ENCODE measurements at regions of chr1 and their contacts with region 1.

Region 1: GRCh38 chr1:186375088-186375953 is at the starts of genes ODR4 and TPR:
- DNase-seq: peak; percentile 97
- H3K4me3 Mint-ChIP-seq: peak within 1 kb of the TSS; percentile 99
- H3K27ac Mint-ChIP-seq: peak within 1 kb of the TSS; percentile 90
- H3K4me1 Mint-ChIP-seq: peaks cover 50% of the 10 kb centered on the region
- H3K27me3 Mint-ChIP-seq: no peaks in the 10 kb centered on the region
- total RNA-seq, gene ODR4: 12.4 to 13.3 TPM
- total RNA-seq, gene TPR: 165 to 167 TPM

Region 2: GRCh38 chr1:186244825-186245224 is 130.5 kb before region 1 on chr1:
- CTCF ChIA-PET with region 1: no interaction called
- POLR2A ChIA-PET with region 1: no interaction called
- DNase-seq: no peak
- H3K4me3 Mint-ChIP-seq: no peak overlapping the region
- H3K27ac Mint-ChIP-seq: no peak overlapping the region
- H3K4me1 Mint-ChIP-seq: no peaks in the 10 kb centered on the region
- H3K27me3 Mint-ChIP-seq: peaks cover 5% of the 10 kb centered on the region

Region 3: GRCh38 chr1:186325239-186325638 is 50.1 kb before region 1 on chr1:
- CTCF ChIA-PET with region 1: interaction called, 17 read pairs
- POLR2A ChIA-PET with region 1: no interaction called
- DNase-seq: peak; percentile 32
- H3K4me3 Mint-ChIP-seq: no peak overlapping the region
- H3K27ac Mint-ChIP-seq: peak overlapping the region; percentile 68
- H3K4me1 Mint-ChIP-seq: peaks cover 38% of the 10 kb centered on the region
- H3K27me3 Mint-ChIP-seq: no peaks in the 10 kb centered on the region

Region 4: GRCh38 chr1:186330758-186331157 is 44.6 kb before region 1 on chr1:
- CTCF ChIA-PET with region 1: interaction called, 17 read pairs
- POLR2A ChIA-PET with region 1: no interaction called
- DNase-seq: no peak
- H3K4me3 Mint-ChIP-seq: no peak overlapping the region
- H3K27ac Mint-ChIP-seq: peak overlapping the region; percentile 42
- H3K4me1 Mint-ChIP-seq: peaks cover 8% of the 10 kb centered on the region
- H3K27me3 Mint-ChIP-seq: no peaks in the 10 kb centered on the region

Region 5: GRCh38 chr1:186363891-186364290 is 11.4 kb before region 1 on chr1:
- CTCF ChIA-PET with region 1: interaction called, 29 read pairs
- POLR2A ChIA-PET with region 1: no interaction called
- DNase-seq: no peak
- H3K4me3 Mint-ChIP-seq: no peak overlapping the region
- H3K27ac Mint-ChIP-seq: no peak overlapping the region
- H3K4me1 Mint-ChIP-seq: peaks cover 8% of the 10 kb centered on the region
- H3K27me3 Mint-ChIP-seq: no peaks in the 10 kb centered on the region

Region 6: DNA sequence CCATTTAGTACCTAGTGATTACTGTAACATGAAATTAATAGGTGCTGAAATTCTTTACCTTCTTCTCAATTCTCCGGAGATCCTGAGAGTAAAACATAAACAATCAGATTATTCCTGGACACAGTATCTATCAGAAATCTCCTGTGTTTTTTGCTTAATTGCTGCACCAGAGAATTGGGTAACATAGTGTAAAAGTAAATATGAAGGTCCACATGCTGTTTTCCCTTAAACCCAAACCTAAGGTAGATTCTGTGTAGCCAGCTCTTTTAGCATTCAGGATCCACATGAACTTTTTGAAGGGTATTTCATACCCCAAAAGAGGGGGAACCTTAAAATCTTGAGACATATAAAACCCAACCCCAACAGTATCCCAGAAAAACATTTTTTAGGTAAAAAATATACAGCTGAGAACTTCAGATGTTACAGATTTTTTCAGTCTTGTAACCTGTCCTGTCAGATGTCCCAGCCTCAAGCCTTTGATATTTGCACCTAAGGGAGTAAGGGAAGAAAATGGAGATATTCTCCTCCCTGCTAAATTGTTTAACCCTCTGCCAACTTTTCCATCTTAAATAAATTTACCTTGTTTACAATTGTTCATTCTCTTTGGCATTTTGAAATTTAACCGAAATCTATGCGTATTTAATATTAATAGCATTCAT is 11.5 kb after region 1 on chr1:
- CTCF ChIA-PET with region 1: interaction called, 28 read pairs
- POLR2A ChIA-PET with region 1: no interaction called
- DNase-seq: no peak
- H3K4me3 Mint-ChIP-seq: no peak overlapping the region
- H3K27ac Mint-ChIP-seq: no peak overlapping the region
- H3K4me1 Mint-ChIP-seq: peaks cover 3% of the 10 kb centered on the region
- H3K27me3 Mint-ChIP-seq: no peaks in the 10 kb centered on the region

Region 7: GRCh38 chr1:186595969-186596368 is 220.6 kb after region 1 on chr1:
- CTCF ChIA-PET with region 1: no interaction called
- POLR2A ChIA-PET with region 1: no interaction called
- DNase-seq: no peak
- H3K4me3 Mint-ChIP-seq: no peak overlapping the region
- H3K27ac Mint-ChIP-seq: no peak overlapping the region
- H3K4me1 Mint-ChIP-seq: no peaks in the 10 kb centered on the region
- H3K27me3 Mint-ChIP-seq: peaks cover 39% of the 10 kb centered on the region

Measured in activated CD4-positive, alpha-beta T cell treated with anti-CD3 and anti-CD28 coated beads, Interleukin-2, amount 10 ng/mL, durations not matched to agents 7 days and 5 days (primary cell).